ENCODE measurements at regions of chr6 and their contacts with region 1.

Region 1: DNA sequence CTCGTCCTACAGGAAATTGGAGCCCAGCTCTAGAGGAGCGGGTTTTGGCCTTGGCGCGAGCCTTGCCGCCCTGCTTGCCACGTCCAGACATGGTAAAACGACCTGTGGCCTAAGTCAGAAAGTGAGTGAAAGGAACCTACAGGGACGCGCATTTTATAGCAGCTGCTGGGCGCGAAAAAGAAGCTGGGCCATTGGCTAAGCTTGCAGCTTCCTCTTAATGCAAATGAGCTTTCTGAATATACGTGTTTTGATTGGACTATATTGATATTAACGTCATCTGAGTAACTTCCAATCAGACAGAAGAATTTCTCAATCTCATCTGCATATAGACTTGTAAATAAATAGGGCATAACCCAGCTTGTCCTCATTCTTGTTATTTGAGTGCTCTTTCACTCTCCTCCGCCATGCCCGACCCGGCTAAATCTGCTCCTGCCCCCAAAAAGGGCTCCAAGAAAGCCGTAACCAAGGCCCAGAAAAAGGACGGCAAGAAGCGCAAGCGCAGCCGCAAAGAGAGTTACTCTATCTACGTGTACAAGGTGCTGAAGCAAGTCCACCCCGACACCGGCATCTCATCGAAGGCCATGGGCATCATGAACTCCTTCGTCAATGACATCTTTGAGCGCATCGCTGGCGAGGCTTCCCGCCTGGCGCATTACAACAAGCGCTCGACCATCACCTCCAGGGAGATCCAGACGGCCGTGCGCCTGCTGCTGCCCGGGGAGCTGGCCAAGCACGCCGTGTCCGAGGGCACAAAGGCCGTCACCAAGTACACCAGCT is 18.9 kb downstream of the OR2B2 start:
- DNase-seq: peak; percentile 92 to 98
- H3K4me3 ChIP-seq: peak overlapping the region; percentile 54 to 65 (median 60)
- H3K27ac ChIP-seq: peak overlapping the region; percentile 83 to 94 (median 88)
- H3K4me1 ChIP-seq: peaks cover 16 to 56% (median 42%) of the 10 kb centered on the region in 4 donors
- H3K27me3 ChIP-seq: peaks cover 0 to 47% (median 0%) of the 10 kb centered on the region in 3 donors
- CTCF ChIP-seq: no peak
- EP300 ChIP-seq: no peak
- POLR2A ChIP-seq: peak in 2 of 4 donors; percentile 62 to 92

Region 2: DNA sequence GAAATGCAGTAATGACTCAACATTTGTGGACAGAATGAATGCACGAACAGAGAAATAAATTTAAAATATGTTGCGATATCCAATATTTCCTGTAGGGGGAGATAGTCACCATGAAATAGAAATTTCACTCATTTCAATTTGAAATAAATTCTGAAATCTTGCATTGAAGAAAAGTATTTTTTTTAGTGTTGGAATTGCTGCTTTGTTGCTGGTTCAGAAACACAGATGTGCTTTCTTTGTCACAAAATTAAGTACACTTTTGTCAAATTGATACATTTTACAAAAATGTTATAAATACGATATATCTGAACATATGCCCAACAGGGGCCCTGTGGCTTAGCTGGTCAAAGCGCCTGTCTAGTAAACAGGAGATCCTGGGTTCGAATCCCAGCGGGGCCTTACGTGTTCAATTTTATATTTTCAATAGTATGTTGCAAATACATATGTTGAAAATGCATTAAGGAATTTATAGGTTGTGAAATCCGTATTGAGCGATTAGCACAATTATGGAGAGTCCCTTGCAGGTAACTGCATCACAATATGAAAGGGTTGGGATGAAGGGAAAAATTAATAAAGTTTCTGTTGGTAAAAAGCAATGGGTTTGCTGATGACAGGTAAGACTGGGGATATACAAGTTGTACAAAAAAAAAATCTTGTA is 731.2 kb before region 1 on chr6:
- intact Hi-C with region 1: loop called (anchors 10 kb)
- DNase-seq: peak in 1 of 2 donors; percentile 67
- H3K4me3 ChIP-seq: no peak overlapping the region
- H3K27ac ChIP-seq: no peak overlapping the region
- H3K4me1 ChIP-seq: peaks cover 5 to 21% (median 12%) of the 10 kb centered on the region in 4 donors
- H3K27me3 ChIP-seq: no peaks in the 10 kb centered on the region
- CTCF ChIP-seq: peak in 5 of 7 experiments; percentile 49 to 76 (median 64)
- EP300 ChIP-seq: no peak
- POLR2A ChIP-seq: no peak

Region 3: GRCh38 chr6:27720607-27721580 is 172.4 kb before region 1 on chr6:
- intact Hi-C with region 1: no loop called
- DNase-seq: peak in 1 of 2 donors; percentile 5
- H3K4me3 ChIP-seq: no peak overlapping the region
- H3K27ac ChIP-seq: no peak overlapping the region
- H3K4me1 ChIP-seq: no peaks in the 10 kb centered on the region
- H3K27me3 ChIP-seq: peaks cover 0 to 46% (median 15%) of the 10 kb centered on the region in 3 donors
- CTCF ChIP-seq: no peak
- EP300 ChIP-seq: no peak
- POLR2A ChIP-seq: no peak

Region 4: DNA sequence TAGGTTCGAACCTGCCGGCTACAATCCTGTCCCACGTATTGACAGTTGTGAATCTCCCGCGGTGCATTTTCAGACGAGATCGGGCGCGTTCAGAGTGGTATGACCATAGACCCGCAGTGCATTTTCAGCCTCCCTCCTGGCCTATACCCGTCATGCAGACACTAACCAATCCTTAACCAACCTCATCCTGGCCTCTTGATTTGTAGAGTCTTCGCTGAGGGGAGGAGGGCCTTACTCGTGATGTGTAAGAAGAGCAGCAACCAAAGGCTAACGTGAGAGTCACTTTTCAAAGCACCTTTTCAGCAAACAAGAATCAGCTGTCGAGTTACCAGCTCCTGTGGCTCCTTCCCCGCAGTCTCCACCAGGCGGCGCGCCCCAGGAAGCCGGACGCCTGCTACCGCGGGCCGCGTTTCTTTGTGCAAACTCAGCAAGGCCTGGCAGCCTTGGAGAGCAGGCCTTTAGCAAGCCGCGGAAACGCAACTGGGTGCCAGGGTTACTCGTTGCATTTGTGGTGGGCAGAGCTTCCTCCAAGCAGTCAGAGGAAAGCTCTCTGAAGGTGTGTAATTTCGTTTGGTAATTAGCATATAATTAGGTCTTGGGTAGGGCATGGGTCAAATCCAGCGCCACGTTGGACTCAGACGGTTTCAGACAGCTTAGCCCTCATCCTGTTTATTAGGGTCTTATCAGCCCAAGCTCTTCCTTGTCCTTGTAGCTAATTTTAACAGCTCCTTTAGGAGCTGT is 120.8 kb before region 1 on chr6:
- intact Hi-C with region 1: loop called (anchors 10 kb)
- DNase-seq: peak; percentile 89 to 95
- H3K4me3 ChIP-seq: peak overlapping the region in 1 of 4 donors; percentile 10
- H3K27ac ChIP-seq: no peak overlapping the region
- H3K4me1 ChIP-seq: peaks cover 4 to 24% (median 11%) of the 10 kb centered on the region in 4 donors
- H3K27me3 ChIP-seq: peaks cover 0 to 66% (median 3%) of the 10 kb centered on the region in 3 donors
- CTCF ChIP-seq: peak in 5 of 7 experiments; percentile 72 to 93 (median 88)
- EP300 ChIP-seq: no peak
- POLR2A ChIP-seq: no peak

Region 5: DNA sequence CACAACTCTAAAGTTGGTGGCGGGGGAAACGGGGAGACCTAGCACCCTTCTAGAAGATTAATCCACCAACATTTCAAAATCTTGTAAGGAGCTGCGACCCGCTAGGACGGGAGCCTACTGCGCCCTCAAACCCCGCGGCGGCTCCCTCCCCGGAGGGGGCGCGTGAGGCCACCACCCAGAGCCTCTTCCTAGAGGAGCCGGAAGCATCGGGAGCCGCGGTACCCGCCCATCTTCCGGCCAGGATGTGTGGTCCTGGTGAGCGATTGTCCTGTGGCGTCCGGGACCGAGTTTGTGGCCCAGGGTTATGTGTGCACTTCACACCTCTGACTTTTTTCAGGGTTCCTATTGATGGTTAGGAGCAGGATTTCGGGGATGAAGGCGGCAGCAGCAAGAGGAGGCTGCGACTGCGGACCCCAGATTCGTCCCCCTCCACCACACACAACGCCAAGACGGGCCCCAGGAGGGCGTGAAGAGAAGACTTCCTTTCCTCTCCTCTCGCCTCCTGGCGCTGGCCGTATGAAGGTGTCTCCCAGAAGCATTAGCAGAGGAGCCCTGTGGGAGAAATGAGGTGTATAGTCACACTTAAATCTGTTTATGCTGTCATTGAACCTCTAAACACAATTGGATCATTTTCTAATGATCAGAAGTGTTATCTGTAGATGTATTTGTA is 197.8 kb after region 1 on chr6:
- intact Hi-C with region 1: no loop called
- DNase-seq: peak in 1 of 2 donors; percentile 65
- H3K4me3 ChIP-seq: peak overlapping the region; percentile 11 to 28 (median 24)
- H3K27ac ChIP-seq: no peak overlapping the region
- H3K4me1 ChIP-seq: no peaks in the 10 kb centered on the region
- H3K27me3 ChIP-seq: peaks cover 0 to 5% (median 0%) of the 10 kb centered on the region in 3 donors
- CTCF ChIP-seq: no peak
- EP300 ChIP-seq: no peak
- POLR2A ChIP-seq: no peak

Measured in stomach (tissue), 19 donors.